Activated CD4-positive, alpha-beta memory T cell treated with anti-CD3 and anti-CD28 coated beads for 36 hours (primary cell): ENCODE measurements at regions of chr15 and their contacts with region 1.

Region 1: GRCh38 chr15:85707519-85708338 is 87.0 kb downstream of the KLHL25 start:
- DNase-seq: peak; percentile 58
- H3K4me3 Mint-ChIP-seq: peak overlapping the region; percentile 76
- H3K27ac Mint-ChIP-seq: peak overlapping the region; percentile 94
- H3K4me1 Mint-ChIP-seq: peaks cover 87% of the 10 kb centered on the region
- H3K27me3 Mint-ChIP-seq: no peaks in the 10 kb centered on the region

Region 2: DNA sequence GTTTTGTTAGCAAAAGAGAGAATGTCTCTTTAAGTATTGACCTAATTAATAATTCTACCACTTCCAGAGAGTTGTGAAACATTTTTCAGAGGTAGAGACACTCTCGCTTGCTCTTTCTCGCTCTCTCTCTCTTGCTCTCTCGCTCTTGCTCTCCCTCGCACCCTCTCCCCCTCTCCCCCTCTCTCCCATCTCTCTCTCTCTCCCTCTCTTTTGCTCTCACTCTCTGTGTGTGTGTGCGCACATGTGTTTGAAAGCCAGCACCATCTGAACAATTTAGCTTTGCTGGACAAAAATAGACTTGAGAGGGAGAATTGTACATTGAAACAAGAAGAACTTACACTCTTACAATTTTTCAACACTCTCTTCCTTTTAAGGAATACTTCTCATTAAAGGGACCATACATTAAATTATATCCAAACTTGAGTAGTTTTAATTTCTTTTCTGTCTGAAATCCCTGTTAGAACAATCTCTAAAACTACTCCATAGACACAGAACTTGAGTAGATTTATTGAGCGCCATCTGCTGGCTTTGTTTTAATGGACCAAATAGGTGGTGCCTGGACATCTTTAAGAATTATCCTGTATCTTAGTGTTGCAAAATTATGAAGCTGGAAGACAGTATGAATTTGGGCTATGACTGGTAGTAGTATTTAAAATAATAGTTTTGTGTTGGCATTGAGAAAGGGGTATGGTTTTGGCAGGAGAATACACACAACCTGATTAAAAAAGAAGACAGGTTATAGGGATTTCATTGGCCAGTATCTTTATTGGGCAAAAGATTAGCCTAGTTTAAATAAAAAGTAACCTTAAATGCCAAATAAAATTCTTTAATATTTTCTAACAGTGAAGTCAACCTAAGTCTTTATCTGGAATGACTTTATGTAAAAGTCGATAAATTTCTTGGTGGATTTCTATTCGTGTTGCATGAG is 202.7 kb before region 1 on chr15:
- CTCF ChIA-PET with region 1: interaction called, 8 read pairs
- POLR2A ChIA-PET with region 1: no interaction called
- intact Hi-C with region 1: loop called (anchors 5 kb)
- DNase-seq: peak; percentile 38
- H3K4me3 Mint-ChIP-seq: no peak overlapping the region
- H3K27ac Mint-ChIP-seq: no peak overlapping the region
- H3K4me1 Mint-ChIP-seq: peaks cover 68% of the 10 kb centered on the region
- H3K27me3 Mint-ChIP-seq: no peaks in the 10 kb centered on the region

Region 3: GRCh38 chr15:85618956-85619491 is 88.7 kb before region 1 on chr15:
- CTCF ChIA-PET with region 1: interaction called, 4 read pairs
- POLR2A ChIA-PET with region 1: interaction called, 7 read pairs
- intact Hi-C with region 1: loop called (anchors 1 kb)
- DNase-seq: peak; percentile 81
- H3K4me3 Mint-ChIP-seq: no peak overlapping the region
- H3K27ac Mint-ChIP-seq: no peak overlapping the region
- H3K4me1 Mint-ChIP-seq: peaks cover 25% of the 10 kb centered on the region
- H3K27me3 Mint-ChIP-seq: no peaks in the 10 kb centered on the region

Region 4: DNA sequence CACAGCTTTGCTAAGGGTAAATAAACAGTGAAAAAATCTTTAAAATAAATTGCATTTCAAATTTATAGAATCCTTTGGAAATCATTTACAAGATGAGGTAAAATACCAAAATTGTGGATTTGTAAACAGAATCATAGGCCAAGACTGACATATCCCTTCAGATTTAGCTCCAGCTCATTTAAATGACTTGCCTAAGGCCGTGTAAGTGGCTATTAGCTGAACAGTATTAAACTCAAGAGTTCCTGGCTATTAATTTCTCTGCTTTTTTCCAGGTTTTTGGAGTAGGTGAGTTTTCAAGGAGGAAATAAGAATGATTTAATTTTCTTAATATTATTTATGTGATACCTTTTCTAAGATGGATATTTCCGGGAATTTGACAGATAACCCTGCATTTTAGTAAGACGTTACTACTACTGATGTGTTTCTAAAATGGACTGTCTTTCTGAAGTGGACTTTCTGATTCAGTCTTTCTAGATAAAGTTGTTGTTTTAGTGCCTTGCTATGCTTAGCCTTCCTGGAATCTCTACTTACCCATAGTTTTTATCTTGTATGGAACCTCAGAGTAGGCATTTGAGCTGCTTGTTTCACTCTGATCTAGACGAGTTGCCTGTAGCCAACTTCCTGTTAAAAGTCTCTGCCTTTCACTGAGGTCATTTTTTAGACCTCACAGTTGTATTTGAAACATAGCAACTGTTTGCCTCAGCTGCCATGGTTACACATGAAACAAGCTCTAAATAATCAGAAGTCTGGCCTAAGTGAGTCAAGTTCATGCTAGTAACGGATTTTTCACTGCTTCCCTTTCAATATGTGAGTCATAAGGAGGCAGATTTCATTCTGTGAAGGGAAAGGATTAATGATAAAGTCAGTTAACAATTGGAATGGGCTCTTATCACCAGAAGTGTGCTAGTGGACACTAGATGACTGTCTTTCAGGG is 40.0 kb before region 1 on chr15:
- CTCF ChIA-PET with region 1: no interaction called
- POLR2A ChIA-PET with region 1: interaction called, 3 read pairs
- intact Hi-C with region 1: loop called (anchors 1 kb)
- DNase-seq: peak; percentile 62
- H3K4me3 Mint-ChIP-seq: peak overlapping the region; percentile 20
- H3K27ac Mint-ChIP-seq: peak overlapping the region; percentile 95
- H3K4me1 Mint-ChIP-seq: peaks cover 33% of the 10 kb centered on the region
- H3K27me3 Mint-ChIP-seq: no peaks in the 10 kb centered on the region

Region 5: GRCh38 chr15:85723960-85724945 is 16.5 kb after region 1 on chr15:
- CTCF ChIA-PET with region 1: interaction called, 23 read pairs
- POLR2A ChIA-PET with region 1: interaction called, 6 read pairs
- intact Hi-C with region 1: loop called (anchors 1 kb)
- DNase-seq: peak; percentile 44
- H3K4me3 Mint-ChIP-seq: peak overlapping the region; percentile 58
- H3K27ac Mint-ChIP-seq: peak overlapping the region; percentile 93
- H3K4me1 Mint-ChIP-seq: peaks cover 64% of the 10 kb centered on the region
- H3K27me3 Mint-ChIP-seq: no peaks in the 10 kb centered on the region